Spleen (tissue), 13 donors: ENCODE measurements at regions of chr10 and their contacts with region 1.

Region 1: DNA sequence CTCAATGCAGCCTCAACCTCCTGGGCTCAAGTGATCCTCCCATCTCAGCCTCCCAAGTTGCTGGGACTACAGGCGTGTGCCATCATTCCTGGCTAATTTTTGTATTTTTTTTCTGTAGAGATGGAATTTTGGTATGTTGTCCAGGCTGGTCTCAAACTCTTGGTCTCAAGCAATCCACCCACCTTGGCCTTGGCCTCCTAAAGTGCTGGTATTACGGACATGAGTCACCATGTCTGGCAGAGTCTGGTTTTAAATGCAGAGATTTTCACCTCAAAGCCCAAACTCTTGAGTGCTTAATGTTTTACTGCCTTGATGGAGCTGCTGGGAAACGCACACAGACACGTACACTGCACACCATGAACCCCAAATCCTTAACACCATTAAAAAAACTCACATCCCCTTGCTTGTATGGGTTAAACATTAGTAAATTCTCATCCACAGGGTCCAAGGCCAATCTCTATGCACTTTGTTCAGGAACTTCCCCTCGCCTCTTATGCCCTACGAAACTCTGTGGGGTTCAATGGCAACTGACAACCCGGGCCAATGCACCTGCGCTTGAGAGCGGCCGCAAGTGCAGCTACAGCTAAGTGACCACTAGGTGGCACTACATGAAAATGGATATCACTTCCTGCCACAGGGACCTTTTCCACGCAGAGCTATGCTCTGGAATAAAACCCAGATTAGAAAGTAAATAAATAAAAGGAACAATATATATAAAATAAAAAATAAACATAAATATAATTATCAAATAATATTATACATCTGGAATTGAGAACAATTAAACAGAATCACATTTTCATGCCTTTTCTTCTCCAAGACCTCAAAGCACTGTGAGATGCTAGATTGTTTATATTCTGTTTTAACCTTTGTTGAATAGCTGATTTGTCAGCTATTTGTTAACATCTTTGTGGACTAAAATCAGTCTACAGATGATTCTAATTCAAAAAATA is 66.9 kb upstream of the AFAP1L2 start:
- DNase-seq: peak; percentile 90
- H3K4me3 ChIP-seq: no peak overlapping the region
- H3K27ac ChIP-seq: no peak overlapping the region
- H3K4me1 ChIP-seq: peaks cover 0 to 17% (median 7%) of the 10 kb centered on the region in 6 donors
- H3K27me3 ChIP-seq: no peaks in the 10 kb centered on the region
- CTCF ChIP-seq: peak; percentile 74 to 99 (median 94)
- POLR2A ChIP-seq: no peak

Region 2: DNA sequence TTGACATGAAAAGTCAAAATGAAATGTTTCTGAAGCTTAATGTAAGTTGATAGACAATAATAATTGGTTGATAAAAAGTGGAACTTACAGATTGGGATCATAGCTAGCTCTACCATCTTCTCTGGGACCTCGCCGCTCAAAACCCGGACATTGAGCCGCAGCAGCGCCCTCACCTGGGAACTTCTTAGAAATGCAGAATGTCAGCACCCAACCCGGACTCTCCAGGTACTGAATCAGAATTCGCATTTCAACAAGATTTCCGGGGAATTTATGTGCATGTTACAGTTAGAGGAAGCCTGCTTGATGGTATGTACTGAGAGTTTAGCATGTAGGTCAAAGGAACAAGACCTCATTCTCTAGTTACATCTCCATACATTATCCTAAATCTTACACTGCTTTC is 223.5 kb after region 1 on chr10:
- intact Hi-C with region 1: loop called (anchors 5 kb)
- DNase-seq: no peak
- H3K4me3 ChIP-seq: no peak overlapping the region
- H3K27ac ChIP-seq: no peak overlapping the region
- H3K4me1 ChIP-seq: peaks cover 0 to 12% (median 0%) of the 10 kb centered on the region in 6 donors
- H3K27me3 ChIP-seq: peaks cover 0 to 8% (median 0%) of the 10 kb centered on the region in 7 donors
- CTCF ChIP-seq: peak in 6 of 11 experiments; percentile 25 to 58 (median 42)
- POLR2A ChIP-seq: no peak

Region 3: DNA sequence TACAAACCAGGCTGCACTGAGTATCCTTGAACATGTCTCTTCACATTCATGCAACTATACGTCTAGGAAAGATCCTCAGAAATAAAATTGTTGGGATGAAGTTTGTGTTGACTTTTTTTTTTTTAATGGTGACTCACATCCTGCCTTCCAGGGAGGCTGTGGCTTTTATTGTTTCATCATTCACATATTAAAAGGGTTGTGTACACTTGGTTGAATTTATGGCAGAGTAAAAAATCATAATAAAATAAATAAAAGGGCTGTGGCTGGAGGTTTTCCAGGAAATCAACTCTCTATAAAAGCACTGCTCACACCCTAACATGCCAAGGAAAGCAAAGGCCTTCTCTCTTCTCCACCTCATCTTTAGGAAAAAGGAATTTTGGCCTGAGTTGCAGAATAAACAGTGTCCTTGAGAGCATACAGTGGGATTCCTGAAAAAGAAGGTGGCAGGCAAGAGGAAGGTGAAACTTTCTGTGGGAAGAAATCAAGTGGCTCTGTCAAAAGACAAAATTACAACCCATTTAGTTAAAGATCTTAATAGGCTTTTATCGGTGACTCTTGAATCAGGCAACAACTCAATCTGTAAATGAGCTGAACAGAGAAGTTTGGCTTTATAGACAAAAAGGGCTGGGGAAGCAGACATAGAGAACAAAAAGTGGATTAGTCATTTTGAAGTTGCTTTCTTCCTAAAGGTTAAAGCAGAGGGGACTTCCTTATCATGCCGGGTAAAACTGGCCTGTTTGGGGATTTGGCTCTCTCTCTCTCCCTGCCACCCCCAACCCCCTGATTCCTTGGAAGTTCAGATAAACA is 308.8 kb after region 1 on chr10:
- intact Hi-C with region 1: loop called (anchors 5 kb)
- DNase-seq: no peak
- H3K4me3 ChIP-seq: no peak overlapping the region
- H3K27ac ChIP-seq: no peak overlapping the region
- H3K4me1 ChIP-seq: peaks cover 0 to 6% (median 0%) of the 10 kb centered on the region in 6 donors
- H3K27me3 ChIP-seq: no peaks in the 10 kb centered on the region
- CTCF ChIP-seq: no peak
- POLR2A ChIP-seq: no peak